Caco-2 (cell line): ENCODE measurements at regions of chr2 and their contacts with region 1.

Region 1: GRCh38 chr2:229445019-229445418 is 173.9 kb upstream of the PID1 start:
- DNase-seq: peak in 1 of 2 experiments; percentile 20
- H3K4me3 ChIP-seq: no peak overlapping the region
- H3K4me3 Mint-ChIP-seq: no peak overlapping the region
- H3K27ac Mint-ChIP-seq: no peak overlapping the region
- H3K4me1 ChIP-seq: no peaks in the 10 kb centered on the region
- H3K4me1 Mint-ChIP-seq: no peaks in the 10 kb centered on the region
- H3K27me3 ChIP-seq: no peaks in the 10 kb centered on the region
- H3K27me3 Mint-ChIP-seq: peaks cover 11% of the 10 kb centered on the region
- CTCF ChIP-seq: no peak

Region 2: GRCh38 chr2:228700638-228701037 is 744.4 kb before region 1 on chr2:
- CTCF ChIA-PET with region 1: no interaction called
- POLR2A ChIA-PET with region 1: no interaction called
- intact Hi-C with region 1: loop called (anchors 10 kb)
- DNase-seq: no peak
- H3K4me3 ChIP-seq: no peak overlapping the region
- H3K4me3 Mint-ChIP-seq: no peak overlapping the region
- H3K27ac Mint-ChIP-seq: no peak overlapping the region
- H3K4me1 ChIP-seq: no peaks in the 10 kb centered on the region
- H3K4me1 Mint-ChIP-seq: no peaks in the 10 kb centered on the region
- H3K27me3 ChIP-seq: no peaks in the 10 kb centered on the region
- H3K27me3 Mint-ChIP-seq: peaks cover 8% of the 10 kb centered on the region
- CTCF ChIP-seq: no peak